ENCODE measurements at regions of chr9 and their contacts with region 1.

Region 1: DNA sequence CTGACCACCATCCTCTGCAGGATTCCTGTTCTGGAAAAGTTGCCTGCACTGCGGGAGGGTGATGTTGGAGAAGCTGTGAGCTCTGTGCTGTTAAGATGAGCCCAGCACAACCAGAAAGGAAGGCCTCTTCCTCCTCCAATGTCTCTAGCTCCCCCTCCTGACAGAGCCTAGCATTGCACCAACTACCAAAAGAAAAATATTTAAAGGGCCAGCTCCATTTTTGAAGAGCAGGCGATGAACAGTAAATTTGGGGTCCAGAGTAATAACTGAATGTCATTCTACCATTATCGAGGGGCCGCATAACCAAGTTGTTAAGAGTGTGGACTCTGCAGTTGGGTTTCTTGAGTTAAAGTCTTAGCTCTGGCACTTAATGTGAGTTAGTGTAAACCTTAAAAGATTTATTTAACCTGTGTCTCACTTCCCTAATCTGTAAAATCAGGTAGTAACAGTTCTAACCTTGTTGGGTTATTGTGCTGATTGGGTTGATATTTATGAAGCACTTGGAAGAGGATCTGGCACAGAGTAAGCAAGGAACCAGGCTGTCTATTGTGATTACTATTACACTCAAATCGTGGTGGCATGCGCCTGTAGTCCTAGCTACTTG is 3.9 kb downstream of the TEX53 start:
- DNase-seq: peak; percentile 81 to 88
- H3K4me3 ChIP-seq: no peak overlapping the region
- H3K27ac ChIP-seq: no peak overlapping the region
- H3K4me1 ChIP-seq: peaks cover 0 to 11% (median 6%) of the 10 kb centered on the region in 4 donors
- H3K27me3 ChIP-seq: no peaks in the 10 kb centered on the region
- CTCF ChIP-seq: peak in 5 of 7 experiments; percentile 78 to 95 (median 87)
- EP300 ChIP-seq: no peak
- POLR2A ChIP-seq: no peak

Region 2: DNA sequence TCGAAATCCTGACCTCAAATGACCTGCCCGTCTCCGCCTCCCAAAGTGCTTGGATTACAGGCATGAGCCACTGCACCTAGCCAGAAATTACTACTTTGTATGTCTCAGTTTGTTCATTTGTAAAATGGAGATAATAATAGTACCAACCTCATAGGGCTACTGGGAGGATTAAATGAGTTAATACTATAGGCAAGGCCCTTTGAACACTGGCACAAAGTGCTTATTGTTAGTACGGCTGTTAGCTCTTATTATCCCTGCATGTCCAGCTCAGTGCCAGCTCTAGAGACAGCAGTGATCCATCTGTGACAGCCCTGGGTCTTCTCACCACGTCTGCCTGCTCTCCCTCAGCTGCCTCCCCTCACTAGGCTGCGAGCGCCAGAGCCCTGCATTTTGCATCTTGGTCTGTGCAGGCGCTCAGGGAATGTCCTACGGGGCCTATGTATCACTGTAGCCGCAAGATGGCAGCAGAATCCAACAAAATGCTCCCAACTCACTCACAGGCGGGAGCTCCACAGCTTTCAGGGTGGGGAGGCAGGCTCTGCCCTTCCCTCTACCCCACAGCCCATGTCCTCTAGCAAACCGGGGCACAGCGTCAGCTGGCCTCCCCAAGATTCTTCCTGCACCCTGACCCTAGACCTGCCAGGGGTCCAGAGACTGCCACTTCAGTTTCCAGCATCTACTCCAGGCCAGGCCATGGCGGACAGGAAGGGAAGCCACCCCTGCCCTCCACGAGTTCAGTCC is 248.2 kb before region 1 on chr9:
- intact Hi-C with region 1: loop called (anchors 5 kb)
- DNase-seq: peak; percentile 81 to 94
- H3K4me3 ChIP-seq: no peak overlapping the region
- H3K27ac ChIP-seq: no peak overlapping the region
- H3K4me1 ChIP-seq: peaks cover 0 to 8% (median 3%) of the 10 kb centered on the region in 4 donors
- H3K27me3 ChIP-seq: no peaks in the 10 kb centered on the region
- CTCF ChIP-seq: peak in 5 of 7 experiments; percentile 55 to 80 (median 75)
- EP300 ChIP-seq: no peak
- POLR2A ChIP-seq: no peak

Region 3: GRCh38 chr9:114484854-114485443 is 168.7 kb before region 1 on chr9:
- intact Hi-C with region 1: loop called (anchors 5 kb)
- DNase-seq: no peak
- H3K4me3 ChIP-seq: no peak overlapping the region
- H3K27ac ChIP-seq: no peak overlapping the region
- H3K4me1 ChIP-seq: peaks cover 0 to 14% (median 4%) of the 10 kb centered on the region in 4 donors
- H3K27me3 ChIP-seq: no peaks in the 10 kb centered on the region
- CTCF ChIP-seq: no peak
- EP300 ChIP-seq: no peak
- POLR2A ChIP-seq: no peak